ENCODE measurements at regions of chr7 and their contacts with region 1.

Region 1: GRCh38 chr7:127651556-127652332 is at the start of gene SND1:
- DNase-seq: peak; percentile 99 to 100
- ATAC-seq: peak; percentile 98
- H3K4me3 ChIP-seq: peak within 1 kb of the TSS; percentile 72 to 79
- H3K27ac ChIP-seq: peak within 1 kb of the TSS; percentile 43 to 93
- H3K4me1 ChIP-seq: no peaks in the 10 kb centered on the region
- H3K27me3 ChIP-seq: no peaks in the 10 kb centered on the region
- total RNA-seq, gene SND1: 136 to 150 TPM

Region 2: DNA sequence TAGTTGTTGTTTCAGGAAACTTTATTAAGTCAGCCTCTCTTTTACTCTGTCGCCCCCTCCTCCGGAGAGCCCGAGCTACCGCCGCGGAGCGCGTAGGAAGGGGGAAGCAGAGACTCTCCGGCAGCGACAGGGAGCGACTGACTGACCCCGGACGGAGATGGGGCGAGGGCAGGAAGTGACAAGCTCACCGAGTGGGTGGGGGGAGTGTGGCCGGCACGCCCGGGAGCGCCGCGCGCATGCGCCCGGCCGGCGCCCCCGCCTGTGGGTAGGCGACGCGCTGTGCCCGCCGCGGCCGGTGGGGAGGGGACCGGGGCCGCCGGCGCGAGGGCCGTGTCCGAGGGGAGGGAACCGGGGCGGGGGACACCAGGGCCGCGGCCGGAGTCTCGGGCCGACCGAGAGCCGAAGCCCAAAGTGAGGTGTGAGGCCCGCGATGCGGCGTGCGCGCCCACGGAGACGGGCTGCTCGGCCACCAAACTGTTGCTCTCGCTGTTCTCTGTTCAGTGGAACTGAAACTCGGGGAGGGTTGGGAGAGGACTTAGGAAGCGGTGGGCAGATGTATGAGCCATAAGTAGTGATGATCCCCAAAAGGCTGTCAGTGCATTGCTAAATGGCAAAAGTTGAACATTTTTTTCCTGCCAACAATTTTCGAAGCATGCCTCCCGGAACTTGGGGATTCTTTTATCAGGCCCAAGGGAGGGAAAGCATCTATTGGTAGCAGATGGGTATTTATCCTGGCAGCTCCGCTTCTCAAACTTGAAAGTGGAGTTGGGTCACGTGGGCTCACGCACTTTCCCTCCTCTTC is 259.0 kb before region 1 on chr7 and contains the start of gene ZNF800:
- intact Hi-C with region 1: loop called in 1 of 2 experiments (anchors 2 kb)
- DNase-seq: peak; percentile 94 to 96
- ATAC-seq: peak; percentile 98
- H3K4me3 ChIP-seq: peak within 1 kb of the TSS; percentile 64 to 93
- H3K27ac ChIP-seq: peak within 1 kb of the TSS; percentile 68 to 70
- H3K4me1 ChIP-seq: peaks cover 0 to 2% of the 10 kb centered on the region in 2 donors
- H3K27me3 ChIP-seq: no peaks in the 10 kb centered on the region
- total RNA-seq, gene ZNF800: 39.5 to 46.8 TPM

Region 3: GRCh38 chr7:127850195-127850594 is 198.5 kb after region 1 on chr7:
- intact Hi-C with region 1: no loop called
- DNase-seq: no peak
- ATAC-seq: no peak
- H3K4me3 ChIP-seq: no peak overlapping the region
- H3K27ac ChIP-seq: no peak overlapping the region
- H3K4me1 ChIP-seq: no peaks in the 10 kb centered on the region
- H3K27me3 ChIP-seq: no peaks in the 10 kb centered on the region